Dorsolateral prefrontal cortex (tissue), 120 donors: ENCODE measurements at regions of chr11 and their contacts with region 1.

Region 1: DNA sequence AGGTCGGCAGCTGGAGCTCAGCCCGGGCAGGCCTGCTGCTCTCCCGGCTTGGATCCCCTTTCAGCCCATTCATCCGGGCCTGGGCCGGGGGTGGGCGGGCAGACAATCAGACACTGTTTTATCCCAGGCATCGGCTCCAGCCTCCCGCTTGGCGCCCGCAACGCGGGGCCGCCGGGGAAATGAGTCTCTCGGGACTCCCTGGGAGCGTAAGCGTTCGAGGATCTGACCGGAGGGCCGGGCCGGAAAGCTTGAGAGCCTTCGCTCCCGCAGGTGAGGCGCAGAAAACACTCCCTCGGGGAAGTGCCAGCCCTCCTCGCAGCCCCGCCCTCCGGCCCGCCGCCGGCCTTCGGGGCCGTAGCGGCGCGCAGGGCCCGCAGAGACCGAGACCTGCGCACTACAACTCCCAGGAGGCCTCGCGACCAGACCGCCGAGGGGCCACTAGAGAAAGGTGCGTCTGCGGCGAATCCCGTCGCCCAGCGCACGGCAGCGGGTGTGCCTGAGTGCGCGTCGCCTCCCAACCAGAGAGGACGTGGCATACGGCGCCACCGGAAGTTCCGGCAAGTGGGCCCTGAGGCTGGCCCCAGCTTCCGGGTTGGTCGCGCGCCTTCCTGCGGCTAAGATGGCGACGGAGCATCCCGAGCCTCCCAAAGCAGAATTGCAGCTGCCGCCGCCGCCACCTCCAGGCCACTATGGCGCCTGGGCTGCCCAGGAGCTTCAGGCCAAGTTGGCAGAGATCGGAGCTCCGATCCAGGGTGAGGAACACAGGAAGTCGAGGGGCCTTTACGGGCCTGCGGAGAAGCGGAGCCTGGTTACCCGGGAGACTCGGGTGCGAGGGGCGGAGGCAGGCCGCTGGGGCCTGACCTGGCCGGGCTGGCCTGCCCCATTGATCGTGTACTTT is at the start of gene SF3B2:
- DNase-seq: peak; percentile 98 to 100 (median 99)
- H3K4me3 ChIP-seq: peak within 1 kb of the TSS; percentile 67 to 100 (median 98)
- H3K27ac ChIP-seq: peak within 1 kb of the TSS; percentile 84 to 100 (median 97)
- H3K27me3 ChIP-seq: peaks cover 0 to 3% (median 0%) of the 10 kb centered on the region in 45 donors
- CTCF ChIP-seq: peak in 46 of 56 donors; percentile 17 to 72 (median 44)
- total RNA-seq, gene SF3B2: 120 to 225 (median 154) TPM

Region 2: GRCh38 chr11:65961232-65961901 is 90.6 kb before region 1 on chr11 and contains the start of gene SART1:
- intact Hi-C with region 1: no loop called
- DNase-seq: peak; percentile 95 to 98 (median 97)
- H3K4me3 ChIP-seq: peak within 1 kb of the TSS; percentile 69 to 100 (median 98)
- H3K27ac ChIP-seq: peak within 1 kb of the TSS; percentile 64 to 98 (median 92)
- H3K27me3 ChIP-seq: no peaks in the 10 kb centered on the region
- CTCF ChIP-seq: peak in 51 of 56 donors; percentile 15 to 70 (median 45)
- total RNA-seq, gene SART1: 31.8 to 73.9 (median 52.1) TPM

Region 3: DNA sequence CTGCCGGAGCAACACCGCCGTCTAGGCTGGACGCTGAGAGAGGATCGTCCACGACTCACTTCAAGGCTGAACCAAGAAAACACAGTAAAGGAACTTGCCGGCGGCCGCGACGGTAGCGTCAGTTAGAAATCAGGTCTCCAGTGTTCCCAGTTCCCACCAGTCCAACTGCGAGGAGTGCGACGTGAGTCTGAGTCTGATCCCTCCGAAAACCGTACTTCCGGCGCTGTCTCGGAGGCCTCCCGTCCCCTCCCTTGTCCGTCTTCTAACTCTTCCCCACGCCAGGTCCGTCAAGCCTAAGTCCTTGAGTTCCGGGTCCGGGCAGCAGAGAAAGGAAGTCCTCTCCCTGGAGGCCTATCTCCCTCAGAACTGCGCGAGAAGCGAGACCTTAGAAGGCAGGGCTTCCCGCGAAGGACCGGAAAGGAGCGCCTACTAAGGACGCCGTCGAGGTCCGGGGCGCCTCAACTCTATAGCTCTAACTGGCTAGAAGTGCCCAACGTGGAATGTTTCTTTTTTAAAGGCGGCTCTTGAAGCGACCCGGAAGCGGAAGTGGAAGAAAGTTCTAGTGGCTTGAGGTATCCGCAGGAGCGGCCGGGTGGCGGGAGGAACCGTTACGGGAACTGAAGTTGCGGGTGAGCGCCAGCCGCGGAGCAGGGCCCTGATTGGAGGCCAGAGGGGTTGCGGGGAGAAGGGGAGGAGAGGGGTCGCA is 49.9 kb before region 1 on chr11 and contains the starts of genes BANF1 and EIF1AD:
- intact Hi-C with region 1: loop called (anchors 1 to 5 kb)
- DNase-seq: peak; percentile 82 to 96 (median 92)
- H3K4me3 ChIP-seq: peak within 1 kb of the TSS; percentile 72 to 100 (median 93)
- H3K27ac ChIP-seq: peak within 1 kb of the TSS; percentile 78 to 99 (median 96)
- H3K27me3 ChIP-seq: no peaks in the 10 kb centered on the region
- CTCF ChIP-seq: peak in 32 of 56 donors; percentile 4 to 56 (median 30)
- total RNA-seq, gene BANF1: 89.7 to 186 (median 129) TPM
- total RNA-seq, gene EIF1AD: 25.8 to 57.5 (median 36.4) TPM

Region 4: DNA sequence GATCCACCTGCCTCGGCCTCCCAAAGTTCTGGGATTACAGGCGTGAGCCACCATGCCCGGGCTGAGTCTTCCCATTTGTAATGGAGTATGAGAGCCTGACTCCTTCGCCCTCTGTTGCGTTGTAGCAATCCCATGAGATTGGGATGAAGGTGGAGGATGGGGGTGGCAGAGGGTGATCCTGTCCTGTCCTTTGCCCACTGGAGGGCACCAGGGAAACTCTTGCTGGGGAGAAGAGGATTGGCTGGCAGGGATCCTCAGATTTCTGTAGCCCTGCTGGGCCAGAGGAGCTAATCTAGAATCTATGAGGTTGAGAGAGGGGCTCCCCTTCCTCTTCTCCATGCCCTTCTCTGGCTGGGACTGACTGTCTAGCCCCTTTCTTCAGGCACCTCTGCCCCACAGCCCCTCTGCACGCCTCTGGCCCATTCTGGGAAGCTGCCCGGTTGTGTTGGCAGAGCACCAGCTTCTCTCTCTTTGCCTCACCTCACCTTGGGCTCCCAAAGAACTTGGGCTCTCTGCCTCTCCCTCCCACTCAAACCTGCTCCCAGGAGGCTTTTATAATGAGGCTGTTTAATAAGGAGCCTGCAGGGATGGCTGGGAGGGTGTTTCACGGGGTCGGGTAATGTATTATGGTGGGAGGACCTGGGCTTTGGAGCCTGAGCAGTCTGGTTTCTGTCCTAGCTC is 16.2 kb before region 1 on chr11:
- intact Hi-C with region 1: no loop called
- DNase-seq: no peak
- H3K4me3 ChIP-seq: no peak overlapping the region
- H3K27ac ChIP-seq: no peak overlapping the region
- H3K27me3 ChIP-seq: no peaks in the 10 kb centered on the region
- CTCF ChIP-seq: no peak

Region 5: DNA sequence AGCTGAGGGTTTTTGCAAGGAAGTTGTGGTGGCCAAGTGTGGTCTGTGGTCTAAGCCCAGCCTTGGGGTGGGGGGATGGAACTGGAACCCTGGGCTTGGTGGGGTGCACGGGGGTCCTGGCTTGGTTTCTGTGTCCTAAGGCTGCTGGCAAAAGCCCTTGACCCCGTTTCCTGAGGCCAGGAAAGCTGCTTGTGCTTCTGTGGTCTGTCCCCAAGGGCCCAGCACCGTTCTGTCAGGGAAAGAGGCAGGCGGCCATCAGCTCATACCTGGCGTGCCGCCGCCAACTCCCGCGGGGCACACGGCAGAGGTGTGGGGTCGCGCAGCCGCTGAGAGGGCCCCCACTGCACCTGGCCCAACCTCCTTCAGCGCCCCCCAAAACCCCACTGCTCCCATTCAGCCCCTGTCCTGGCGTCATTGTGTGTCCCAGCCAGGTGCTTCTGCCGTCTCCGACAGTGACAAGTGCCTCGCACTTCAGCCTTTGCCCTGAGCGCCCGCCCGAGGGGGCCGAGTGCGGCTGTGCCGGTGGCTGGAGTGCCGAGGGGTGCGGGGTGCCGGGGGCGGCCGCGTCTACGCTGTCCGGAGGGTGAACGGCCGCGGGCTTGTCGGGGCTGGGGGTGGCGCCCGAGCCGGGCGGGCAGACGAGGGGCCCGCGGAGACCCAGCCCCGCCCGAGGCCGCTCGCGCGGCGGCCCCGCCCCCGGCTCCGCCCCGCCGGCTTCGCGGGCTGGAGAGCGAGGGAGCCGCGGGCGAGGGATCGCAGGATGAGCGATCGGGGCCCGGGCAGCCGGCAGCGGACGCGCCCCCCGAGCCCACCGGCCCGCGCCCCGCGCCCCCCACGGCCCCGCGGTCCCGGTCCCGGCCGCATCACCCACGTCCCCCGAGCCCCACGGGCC is 225.7 kb after region 1 on chr11 and contains the start of gene CNIH2:
- intact Hi-C with region 1: loop called in 1 of 2 experiments (anchors 5 kb)
- DNase-seq: peak in 3 of 10 donors; percentile 38 to 77 (median 59)
- H3K4me3 ChIP-seq: peak within 1 kb of the TSS; percentile 21 to 70 (median 53)
- H3K27ac ChIP-seq: peak within 1 kb of the TSS in 49 of 59 donors; percentile 16 to 84 (median 72)
- H3K27me3 ChIP-seq: no peaks in the 10 kb centered on the region
- CTCF ChIP-seq: no peak
- total RNA-seq, gene CNIH2: 27.7 to 125 (median 64.9) TPM

Region 6: DNA sequence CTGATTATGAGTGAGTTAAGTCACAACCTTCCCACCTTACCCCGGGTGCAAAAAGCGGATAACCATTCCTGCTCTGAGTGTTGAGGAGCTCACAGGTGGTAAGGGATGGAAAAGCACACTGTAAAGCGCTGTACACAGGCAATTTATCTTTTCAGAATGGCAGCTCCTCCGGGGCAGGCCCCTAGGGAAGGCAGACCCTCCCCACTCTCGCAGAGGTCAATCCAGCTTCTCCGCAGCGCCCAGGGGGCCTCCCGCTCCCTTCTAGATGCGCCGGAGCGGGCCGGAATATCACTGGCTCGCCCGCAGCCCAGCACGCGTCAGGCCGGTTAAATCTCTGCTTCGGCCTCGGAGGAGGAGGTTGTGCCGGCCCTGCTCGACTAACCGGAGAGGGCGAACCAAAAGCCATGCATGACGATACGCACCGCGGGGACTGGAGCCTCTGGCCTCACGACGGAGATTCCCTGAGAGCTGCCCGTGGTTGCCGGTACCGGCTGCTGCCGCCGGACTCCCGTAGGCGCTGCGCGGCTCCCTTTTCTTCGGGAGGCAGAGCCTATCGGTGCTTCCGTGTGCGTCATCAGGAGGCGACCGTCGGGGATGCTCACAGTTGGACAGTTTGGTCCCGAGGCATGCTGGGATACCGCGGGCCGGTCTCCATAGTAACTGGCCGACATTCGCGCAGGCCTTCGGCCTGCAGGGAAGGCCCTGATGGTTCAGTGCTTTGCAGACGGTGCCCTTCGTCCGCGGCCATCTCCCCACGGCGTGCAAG is 292.7 kb after region 1 on chr11 and contains the start of gene BRMS1:
- intact Hi-C with region 1: loop called in 1 of 2 experiments (anchors 10 kb)
- DNase-seq: peak; percentile 97 to 100 (median 99)
- H3K4me3 ChIP-seq: peak within 1 kb of the TSS; percentile 59 to 100 (median 94)
- H3K27ac ChIP-seq: peak within 1 kb of the TSS in 58 of 59 donors; percentile 8 to 98 (median 80)
- H3K27me3 ChIP-seq: no peaks in the 10 kb centered on the region
- CTCF ChIP-seq: peak in 53 of 56 donors; percentile 13 to 70 (median 49)
- total RNA-seq, gene BRMS1: 10.3 to 25.1 (median 16.2) TPM